Activated T-helper 2 cell treated with anti-CD3 and anti-CD28 coated beads, Interferon-gamma antibody, Interleukin-2, Interleukin-4, amounts not matched to agents 10 μg/mL and 5 μg/mL and 100 μg/mL, durations not matched to agents 14 hours and 24 hours and 36 hours (primary cell): ENCODE measurements at regions of chr1 and their contacts with region 1.

Region 1: DNA sequence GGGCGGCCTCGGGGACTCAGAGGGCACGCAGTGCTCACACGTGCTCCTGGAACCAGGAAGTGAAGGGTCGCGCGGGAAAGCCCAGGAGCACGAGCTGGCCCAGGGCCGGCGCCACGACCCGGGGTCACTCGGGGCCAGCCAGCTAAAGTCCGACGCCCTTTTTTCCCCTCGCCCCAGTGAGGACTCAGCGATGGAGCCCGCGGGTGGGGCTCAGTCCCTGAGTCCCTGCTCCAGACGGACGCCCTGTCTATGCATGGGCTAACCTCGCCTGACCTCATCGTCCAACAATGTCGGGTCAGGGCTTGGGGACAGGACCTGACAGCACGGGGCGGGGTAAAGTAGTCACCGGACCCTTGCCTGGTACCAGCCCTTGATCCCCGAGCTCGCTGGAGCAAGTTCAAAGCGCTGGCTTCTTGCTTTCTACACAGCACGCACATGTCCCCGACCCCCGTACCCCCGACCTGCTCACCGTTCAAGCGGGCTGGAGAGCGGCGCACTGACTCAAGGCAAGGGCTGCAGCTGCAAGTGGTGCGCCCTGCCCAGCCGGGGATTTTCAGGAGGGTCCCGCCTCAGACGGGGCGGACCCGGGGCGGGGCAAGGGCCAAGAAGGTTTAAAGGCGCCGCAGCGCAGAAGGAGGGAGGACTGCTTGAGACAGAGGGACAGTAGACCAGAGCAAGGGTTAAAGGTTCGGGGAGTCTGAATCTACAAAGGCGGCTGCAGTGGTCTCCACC is at the start of gene TAGLN2:
- DNase-seq: peak; percentile 86
- H3K4me3 Mint-ChIP-seq: peak within 1 kb of the TSS; percentile 95
- H3K27ac Mint-ChIP-seq: peak within 1 kb of the TSS; percentile 98
- H3K4me1 Mint-ChIP-seq: peaks cover 36% of the 10 kb centered on the region
- H3K27me3 Mint-ChIP-seq: no peaks in the 10 kb centered on the region
- total RNA-seq, gene TAGLN2: 558 and 578 TPM in 2 replicates

Region 2: GRCh38 chr1:159077120-159077961 is 847.8 kb before region 1 on chr1:
- intact Hi-C with region 1: loop called (anchors 2 kb)
- DNase-seq: peak; percentile 95
- H3K4me3 Mint-ChIP-seq: peak overlapping the region; percentile 89
- H3K27ac Mint-ChIP-seq: peak overlapping the region; percentile 98
- H3K4me1 Mint-ChIP-seq: peaks cover 37% of the 10 kb centered on the region
- H3K27me3 Mint-ChIP-seq: no peaks in the 10 kb centered on the region

Region 3: GRCh38 chr1:159798893-159799292 is 126.3 kb before region 1 on chr1:
- intact Hi-C with region 1: no loop called
- DNase-seq: no peak
- H3K4me3 Mint-ChIP-seq: no peak overlapping the region
- H3K27ac Mint-ChIP-seq: no peak overlapping the region
- H3K4me1 Mint-ChIP-seq: peaks cover 11% of the 10 kb centered on the region
- H3K27me3 Mint-ChIP-seq: peaks cover 44% of the 10 kb centered on the region

Region 4: DNA sequence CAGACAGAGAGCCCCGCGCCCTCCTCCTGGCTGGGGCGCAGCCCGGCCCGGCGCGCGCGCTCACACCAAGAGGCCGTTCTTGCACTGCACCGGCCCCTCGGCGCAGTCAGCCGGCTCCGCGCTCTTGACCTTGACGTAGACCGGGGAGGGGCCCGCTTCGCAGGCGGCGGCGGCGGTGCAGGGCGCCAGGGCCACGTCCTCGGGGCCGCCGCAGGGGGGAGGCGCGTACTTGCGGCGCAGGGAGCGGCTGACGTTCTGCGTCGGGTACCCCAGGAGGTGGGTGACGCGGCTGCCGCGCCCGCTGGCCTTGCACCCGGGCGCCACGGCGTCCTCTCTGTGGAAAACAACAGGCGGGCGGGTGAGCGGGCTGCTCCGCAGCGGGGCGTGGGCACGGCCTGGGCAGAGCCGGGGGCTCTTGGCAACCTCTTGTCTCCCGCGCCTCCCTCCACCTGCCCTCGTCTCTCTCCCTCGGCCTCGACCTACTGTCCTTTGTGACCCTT is 70.4 kb before region 1 on chr1:
- intact Hi-C with region 1: loop called (anchors 1 kb)
- DNase-seq: peak; percentile 69
- H3K4me3 Mint-ChIP-seq: peak overlapping the region; percentile 85
- H3K27ac Mint-ChIP-seq: peak overlapping the region; percentile 62
- H3K4me1 Mint-ChIP-seq: peaks cover 15% of the 10 kb centered on the region
- H3K27me3 Mint-ChIP-seq: peaks cover 19% of the 10 kb centered on the region

Region 5: GRCh38 chr1:159869173-159869572 is 56.0 kb before region 1 on chr1:
- intact Hi-C with region 1: no loop called
- DNase-seq: no peak
- H3K4me3 Mint-ChIP-seq: no peak overlapping the region
- H3K27ac Mint-ChIP-seq: no peak overlapping the region
- H3K4me1 Mint-ChIP-seq: peaks cover 12% of the 10 kb centered on the region
- H3K27me3 Mint-ChIP-seq: peaks cover 1% of the 10 kb centered on the region

Region 6: GRCh38 chr1:160629286-160630210 is 704.4 kb after region 1 on chr1:
- intact Hi-C with region 1: loop called (anchors 10 kb)
- DNase-seq: peak; percentile 73
- H3K4me3 Mint-ChIP-seq: peak overlapping the region; percentile 20
- H3K27ac Mint-ChIP-seq: peak overlapping the region; percentile 100
- H3K4me1 Mint-ChIP-seq: peaks cover 95% of the 10 kb centered on the region
- H3K27me3 Mint-ChIP-seq: no peaks in the 10 kb centered on the region